Activated T-helper 1 cell treated with anti-CD3 and anti-CD28 coated beads, Interleukin-12 subunit alpha, Interleukin-12 subunit beta, Interleukin-2, Interleukin-4 antibody, amounts not matched to agents 30 ng/mL and 10 ng/mL and 1 ng/mL, durations not matched to agents 14 hours and 24 hours and 36 hours (primary cell): ENCODE measurements at regions of chr6 and their contacts with region 1.

Region 1: GRCh38 chr6:28863604-28864320 is 60.0 kb downstream of the TRIM27 start:
- DNase-seq: peak; percentile 80
- H3K4me3 Mint-ChIP-seq: peak overlapping the region; percentile 94
- H3K27ac Mint-ChIP-seq: peak overlapping the region; percentile 93
- H3K4me1 Mint-ChIP-seq: peaks cover 47% of the 10 kb centered on the region
- H3K27me3 Mint-ChIP-seq: peaks cover 17% of the 10 kb centered on the region

Region 2: GRCh38 chr6:27146706-27147505 is 1716.9 kb before region 1 on chr6:
- intact Hi-C with region 1: loop called (anchors 5 kb)
- DNase-seq: peak; percentile 82
- H3K4me3 Mint-ChIP-seq: no peak overlapping the region
- H3K27ac Mint-ChIP-seq: no peak overlapping the region
- H3K4me1 Mint-ChIP-seq: peaks cover 17% of the 10 kb centered on the region
- H3K27me3 Mint-ChIP-seq: no peaks in the 10 kb centered on the region

Region 3: DNA sequence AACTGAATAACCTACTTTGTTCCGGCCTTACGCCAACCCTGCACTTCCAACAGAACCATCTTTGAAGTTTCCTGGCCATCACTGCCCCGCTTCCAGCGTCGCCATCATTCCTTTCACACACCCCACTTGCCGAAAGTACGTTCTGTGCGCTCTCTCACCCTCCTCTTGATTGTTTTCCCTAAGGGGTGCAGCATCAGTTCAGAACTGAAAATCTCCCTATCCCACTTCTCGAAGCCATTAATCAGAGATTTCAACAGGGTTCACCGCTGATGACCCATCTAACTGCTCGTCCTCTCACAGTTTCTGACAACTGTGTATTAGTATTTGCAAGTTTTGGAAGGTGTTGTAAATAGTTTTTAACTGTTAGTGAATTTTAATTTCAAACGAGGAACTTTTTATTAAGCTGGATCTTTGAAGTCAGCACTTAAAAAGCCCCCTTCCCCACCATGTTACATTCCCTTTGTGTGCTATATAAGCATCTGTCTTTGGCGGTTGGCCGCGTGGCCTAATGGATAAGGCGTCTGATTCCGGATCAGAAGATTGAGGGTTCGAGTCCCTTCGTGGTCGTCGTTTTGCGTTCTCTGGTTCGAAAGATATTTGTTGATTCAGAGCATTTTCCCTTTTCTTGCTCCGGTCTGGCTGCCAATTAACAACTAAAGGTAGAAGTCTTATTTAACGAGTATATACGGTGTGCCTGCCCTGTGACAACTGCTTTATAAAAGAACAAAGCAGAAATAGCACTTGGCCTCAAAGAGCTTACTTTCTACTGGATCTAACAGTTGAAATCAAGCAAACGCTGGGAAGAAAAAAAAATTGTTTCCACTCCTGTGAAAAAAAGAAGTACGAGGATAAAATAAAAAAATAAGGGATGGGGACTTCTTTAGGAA is 17.4 kb after region 1 on chr6:
- intact Hi-C with region 1: loop called (anchors 1 kb)
- DNase-seq: peak; percentile 30
- H3K4me3 Mint-ChIP-seq: peak overlapping the region; percentile 76
- H3K27ac Mint-ChIP-seq: peak overlapping the region; percentile 81
- H3K4me1 Mint-ChIP-seq: peaks cover 34% of the 10 kb centered on the region
- H3K27me3 Mint-ChIP-seq: peaks cover 36% of the 10 kb centered on the region

Region 4: DNA sequence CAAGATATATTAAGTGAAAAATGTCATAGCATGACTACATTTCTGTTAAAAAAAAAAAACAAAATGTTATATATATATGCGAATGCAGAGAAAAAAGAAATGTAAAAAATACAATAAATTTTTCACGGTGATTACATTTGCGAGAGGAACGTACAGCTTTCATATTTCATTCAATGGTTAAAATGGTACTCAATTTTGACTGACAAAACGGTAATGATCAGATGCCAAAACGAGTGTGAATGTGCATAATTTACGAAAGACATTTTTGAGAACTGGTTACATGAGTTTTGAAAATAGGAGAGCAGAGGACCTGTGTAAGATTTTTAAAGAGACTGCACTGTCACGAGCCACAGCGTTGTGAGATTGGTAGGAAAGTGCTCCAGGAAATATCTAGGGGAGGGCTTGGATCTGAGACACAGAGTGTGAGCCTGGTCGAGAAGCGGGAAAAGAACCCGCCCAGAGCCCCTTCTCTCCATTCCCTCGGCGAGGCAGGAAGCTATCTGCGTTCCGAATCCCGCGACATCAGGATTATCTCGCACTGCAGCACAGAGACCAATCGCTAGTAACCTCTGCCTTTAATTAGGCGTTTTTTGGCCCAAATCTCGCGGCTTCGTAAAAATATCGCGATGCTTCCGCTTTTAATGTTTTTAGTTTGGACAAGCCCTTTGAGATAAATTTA is 31.5 kb after region 1 on chr6:
- intact Hi-C with region 1: loop called (anchors 1 kb)
- DNase-seq: peak; percentile 89
- H3K4me3 Mint-ChIP-seq: peak overlapping the region; percentile 90
- H3K27ac Mint-ChIP-seq: peak overlapping the region; percentile 100
- H3K4me1 Mint-ChIP-seq: peaks cover 25% of the 10 kb centered on the region
- H3K27me3 Mint-ChIP-seq: peaks cover 6% of the 10 kb centered on the region

Region 5: GRCh38 chr6:28923318-28924102 is 59.7 kb after region 1 on chr6 and contains the start of gene TRIM27:
- intact Hi-C with region 1: loop called (anchors 1 kb)
- DNase-seq: peak; percentile 80
- H3K4me3 Mint-ChIP-seq: peak within 1 kb of the TSS; percentile 93
- H3K27ac Mint-ChIP-seq: peak within 1 kb of the TSS; percentile 91
- H3K4me1 Mint-ChIP-seq: peaks cover 33% of the 10 kb centered on the region
- H3K27me3 Mint-ChIP-seq: no peaks in the 10 kb centered on the region
- total RNA-seq, gene TRIM27: 67.2 and 67.4 TPM in 2 replicates

Region 6: GRCh38 chr6:28981833-28982475 is 118.2 kb after region 1 on chr6:
- intact Hi-C with region 1: loop called (anchors 1 kb)
- DNase-seq: peak; percentile 59
- H3K4me3 Mint-ChIP-seq: peak overlapping the region; percentile 90
- H3K27ac Mint-ChIP-seq: peak overlapping the region; percentile 95
- H3K4me1 Mint-ChIP-seq: peaks cover 59% of the 10 kb centered on the region
- H3K27me3 Mint-ChIP-seq: peaks cover 22% of the 10 kb centered on the region